Activated T-helper 1 cell treated with anti-CD3 and anti-CD28 coated beads, Interleukin-12 subunit alpha, Interleukin-12 subunit beta, Interleukin-2, Interleukin-4 antibody, amounts not matched to agents 30 ng/mL and 10 ng/mL and 1 ng/mL, durations not matched to agents 14 hours and 24 hours and 36 hours (primary cell): ENCODE measurements at regions of chr10 and their contacts with region 1.

Region 1: GRCh38 chr10:11036407-11037011 is 18.8 kb downstream of the CELF2 start:
- DNase-seq: no peak
- H3K4me3 Mint-ChIP-seq: no peak overlapping the region
- H3K27ac Mint-ChIP-seq: no peak overlapping the region
- H3K4me1 Mint-ChIP-seq: no peaks in the 10 kb centered on the region
- H3K27me3 Mint-ChIP-seq: peaks cover 21% of the 10 kb centered on the region

Region 2: DNA sequence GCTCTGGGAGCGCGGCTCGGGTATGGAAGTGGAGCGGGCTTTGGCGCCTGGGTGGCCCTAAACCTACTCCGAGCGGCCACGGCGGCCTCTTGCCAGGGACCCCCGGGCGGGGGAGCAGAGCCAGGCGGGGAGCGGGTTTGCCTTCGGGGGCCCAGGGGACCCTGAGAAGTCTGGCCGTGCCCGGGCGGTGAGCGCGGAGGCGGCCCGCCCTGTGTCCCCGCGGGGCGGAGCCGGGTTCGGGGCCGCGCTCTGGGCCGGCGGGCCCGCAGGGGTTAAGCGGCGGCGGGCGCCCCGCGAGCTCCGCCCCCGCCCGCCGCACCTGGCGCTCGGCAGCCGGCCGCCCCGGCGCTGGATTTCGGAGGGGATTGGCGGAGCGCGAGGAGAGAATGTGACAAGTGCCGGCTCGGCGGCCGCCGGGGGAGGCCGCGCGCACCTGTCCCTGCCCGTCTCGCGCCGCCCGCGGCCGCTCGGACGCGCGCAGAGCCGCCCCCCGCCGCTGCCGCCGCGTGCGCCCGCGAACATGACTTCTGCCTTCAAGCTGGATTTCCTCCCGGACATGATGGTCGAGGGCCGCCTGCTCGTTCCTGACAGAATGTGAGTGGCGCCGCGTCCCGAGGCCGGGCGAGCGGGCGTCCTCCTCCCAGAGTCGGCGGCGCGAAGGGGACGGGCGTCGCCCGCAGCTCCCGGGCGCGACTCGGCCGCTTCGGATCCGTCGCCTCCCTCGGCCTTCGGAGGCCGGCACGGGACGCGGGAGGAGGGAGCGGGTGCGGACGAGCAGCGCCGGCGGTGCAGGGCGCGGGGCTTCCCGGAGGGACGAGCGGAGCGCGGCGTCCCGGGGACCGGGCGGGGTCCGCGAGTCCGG is 18.7 kb before region 1 on chr10 and contains the start of gene CELF2:
- intact Hi-C with region 1: loop called (anchors 2 kb)
- DNase-seq: peak; percentile 37
- H3K4me3 Mint-ChIP-seq: peak within 1 kb of the TSS; percentile 71
- H3K27ac Mint-ChIP-seq: peak within 1 kb of the TSS; percentile 6
- H3K4me1 Mint-ChIP-seq: peaks cover 20% of the 10 kb centered on the region
- H3K27me3 Mint-ChIP-seq: peaks cover 83% of the 10 kb centered on the region
- total RNA-seq, gene CELF2: 110 and 111 TPM in 2 replicates